Ascending aorta (tissue), 2 donors: ENCODE measurements at regions of chr20 and their contacts with region 1.

Region 1: DNA sequence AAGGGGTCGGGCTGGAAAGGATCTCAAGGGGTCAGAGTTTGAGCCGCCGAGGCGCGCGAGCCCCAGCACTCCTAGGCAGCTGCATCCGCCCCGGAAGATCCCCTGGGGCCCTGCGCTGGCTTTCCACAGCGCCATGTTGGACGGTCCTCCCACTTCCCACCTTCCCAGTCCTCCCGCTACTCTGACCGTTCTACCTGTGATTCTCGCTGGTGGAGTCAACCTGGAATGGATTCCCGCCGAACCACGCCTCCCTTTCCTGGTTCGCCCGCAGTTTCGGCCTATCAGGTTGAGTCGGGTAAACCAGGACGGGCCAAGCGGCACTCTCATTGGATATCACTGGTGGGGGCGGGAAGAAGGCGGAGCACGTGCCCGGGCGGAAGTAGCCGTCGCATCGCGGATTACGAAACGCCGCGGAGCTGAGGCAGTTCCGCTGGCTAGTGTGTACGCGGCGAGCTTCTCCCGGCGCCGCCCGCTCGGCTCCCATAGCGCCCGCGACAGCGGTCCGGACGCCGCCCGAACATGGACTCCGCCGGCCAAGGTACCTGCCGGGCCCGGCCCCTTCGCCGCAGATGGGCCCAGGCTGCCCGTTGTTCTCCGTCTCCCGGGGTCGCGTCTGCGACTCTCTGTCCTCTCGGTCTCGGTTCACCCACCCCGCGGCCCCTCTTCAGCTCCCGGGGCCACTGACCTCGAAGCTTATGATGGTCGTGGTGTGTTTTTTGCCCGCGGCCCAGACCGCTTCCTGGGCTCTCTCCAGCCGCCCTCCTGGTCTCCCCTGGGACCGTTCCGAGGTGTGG is at the start of gene TPD52L2:
- DNase-seq: peak; percentile 95 to 99
- H3K4me3 ChIP-seq: peak within 1 kb of the TSS; percentile 77 to 92
- H3K27ac ChIP-seq: peak within 1 kb of the TSS; percentile 92 to 98
- H3K4me1 ChIP-seq: peaks cover 0 to 22% of the 10 kb centered on the region in 2 donors
- H3K27me3 ChIP-seq: no peaks in the 10 kb centered on the region
- CTCF ChIP-seq: peak in 1 of 3 experiments; percentile 5
- total RNA-seq, gene TPD52L2: 161 TPM

Region 2: GRCh38 chr20:63537525-63538203 is 327.4 kb before region 1 on chr20:
- intact Hi-C with region 1: loop called (anchors 2 kb)
- DNase-seq: peak; percentile 66 to 90
- H3K4me3 ChIP-seq: peak overlapping the region; percentile 5 to 32
- H3K27ac ChIP-seq: no peak overlapping the region
- H3K4me1 ChIP-seq: peaks cover 0 to 2% of the 10 kb centered on the region in 2 donors
- H3K27me3 ChIP-seq: peaks cover 8% of the 10 kb centered on the region
- CTCF ChIP-seq: peak; percentile 93 to 94 (median 94)

Region 3: DNA sequence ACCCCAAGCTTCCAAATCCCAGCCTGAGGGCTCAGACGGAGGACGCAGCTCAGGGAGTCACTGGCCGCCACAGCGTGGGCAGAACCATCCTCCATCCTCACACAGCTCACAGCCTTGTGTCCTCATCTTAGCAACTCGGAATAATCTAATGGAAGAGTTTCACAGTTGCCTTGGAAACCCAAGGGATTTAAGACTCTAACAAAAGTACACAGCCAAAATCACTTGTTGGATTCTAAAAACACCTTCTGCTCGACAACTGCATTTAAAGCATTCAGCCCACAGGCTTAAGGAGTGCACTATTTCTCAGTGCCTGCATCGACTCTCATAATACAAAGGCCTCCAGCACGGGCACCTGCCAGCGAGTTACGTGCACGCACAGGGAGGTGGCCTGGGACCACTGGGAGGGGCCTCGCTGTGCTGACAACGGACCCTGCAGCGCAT is 79.3 kb before region 1 on chr20:
- intact Hi-C with region 1: loop called (anchors 2 kb)
- DNase-seq: no peak
- H3K4me3 ChIP-seq: no peak overlapping the region
- H3K27ac ChIP-seq: no peak overlapping the region
- H3K4me1 ChIP-seq: no peaks in the 10 kb centered on the region
- H3K27me3 ChIP-seq: no peaks in the 10 kb centered on the region
- CTCF ChIP-seq: no peak

Region 4: GRCh38 chr20:63835021-63835858 is 29.8 kb before region 1 on chr20:
- intact Hi-C with region 1: loop called (anchors 1 kb)
- DNase-seq: peak; percentile 88 to 95
- H3K4me3 ChIP-seq: peak overlapping the region in 1 of 2 donors; percentile 16
- H3K27ac ChIP-seq: peak overlapping the region; percentile 60 to 73
- H3K4me1 ChIP-seq: peaks cover 14 to 20% of the 10 kb centered on the region in 2 donors
- H3K27me3 ChIP-seq: no peaks in the 10 kb centered on the region
- CTCF ChIP-seq: no peak

Region 5: DNA sequence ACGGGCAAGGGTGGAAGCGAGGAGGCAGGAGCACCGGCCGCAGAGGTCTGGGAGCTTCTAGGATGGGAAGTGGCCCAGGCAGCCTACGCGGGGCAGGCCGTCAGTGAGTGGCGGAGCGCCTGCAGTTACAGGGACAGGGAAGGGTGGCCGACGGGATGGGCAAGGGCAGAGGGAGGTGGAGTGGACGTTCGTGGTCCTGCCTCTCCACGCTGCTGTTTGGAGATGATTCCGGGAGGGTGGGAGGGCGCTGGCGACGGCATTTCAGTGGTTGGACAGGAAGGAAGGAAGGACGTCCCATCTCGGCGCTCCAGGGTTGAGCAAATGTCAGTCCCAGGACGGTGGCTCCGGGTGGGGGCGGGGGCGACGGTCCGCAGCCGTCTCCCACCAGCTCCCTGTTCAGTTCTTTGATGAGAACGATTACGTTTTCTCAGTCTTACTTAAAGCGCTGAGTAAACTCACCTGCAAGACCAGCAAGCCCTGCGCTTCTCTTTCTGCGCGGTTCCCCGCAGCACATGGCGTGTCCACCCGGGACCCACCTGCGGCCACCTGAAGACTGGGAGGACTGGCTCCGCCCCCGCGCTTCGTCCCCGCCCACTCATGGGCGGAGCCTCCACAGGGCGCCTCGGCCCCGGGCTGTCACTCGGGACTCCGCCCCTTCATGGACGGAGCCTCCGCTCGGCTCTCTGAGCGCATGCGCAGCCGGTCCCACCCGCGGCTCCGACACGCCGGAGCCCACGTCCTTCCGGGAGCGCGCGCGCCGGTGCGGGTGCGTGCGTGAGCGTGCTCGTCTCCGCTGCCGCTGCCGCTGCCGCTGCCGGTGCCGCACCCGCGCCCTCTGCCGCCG is 29.5 kb after region 1 on chr20 and contains the start of gene DNAJC5:
- intact Hi-C with region 1: loop called (anchors 1 kb)
- DNase-seq: peak; percentile 64 to 96
- H3K4me3 ChIP-seq: peak within 1 kb of the TSS; percentile 77 to 91
- H3K27ac ChIP-seq: peak within 1 kb of the TSS; percentile 62 to 63
- H3K4me1 ChIP-seq: peaks cover 11 to 12% of the 10 kb centered on the region in 2 donors
- H3K27me3 ChIP-seq: no peaks in the 10 kb centered on the region
- CTCF ChIP-seq: no peak
- total RNA-seq, gene DNAJC5: 42.9 TPM

Region 6: DNA sequence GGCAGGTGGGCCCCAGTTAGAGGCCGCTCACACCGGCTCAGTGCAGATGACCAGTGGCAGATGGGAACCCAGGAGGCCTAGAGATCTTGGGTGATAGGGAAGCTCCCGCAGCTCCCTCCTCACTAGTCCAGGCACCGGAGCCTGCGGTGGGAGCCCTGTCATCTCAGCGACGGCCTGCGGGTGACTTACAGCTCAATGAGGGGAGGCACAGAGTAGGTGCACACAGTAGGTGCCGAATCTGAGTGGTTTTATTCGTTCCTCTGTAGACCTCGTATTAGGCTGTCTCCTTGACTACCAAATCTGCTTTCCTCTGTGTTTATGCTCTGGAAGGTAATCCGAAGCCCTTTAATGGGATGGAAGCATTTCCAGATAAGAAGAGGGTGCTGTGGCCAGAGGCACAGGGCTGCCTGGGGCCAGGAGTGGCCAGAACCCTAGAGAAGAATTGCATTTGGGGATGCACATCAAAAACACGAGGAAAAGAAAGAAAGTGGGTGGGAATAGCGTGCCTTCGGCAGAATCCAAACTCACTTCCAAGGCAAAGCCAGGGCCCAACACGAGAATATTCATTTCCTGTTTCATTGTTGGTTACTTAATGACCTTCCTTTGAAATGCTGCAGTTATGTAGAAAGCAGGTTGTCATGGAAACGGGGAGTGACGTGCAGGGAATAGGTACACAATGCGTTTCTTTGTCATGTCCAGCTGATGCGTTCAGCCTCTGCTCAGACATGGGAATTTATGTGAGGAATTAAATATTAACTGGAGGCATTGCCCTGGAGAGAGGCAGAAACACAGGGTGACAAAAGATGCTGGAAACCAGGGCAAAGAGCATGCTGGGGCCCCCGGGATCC is 323.9 kb after region 1 on chr20:
- intact Hi-C with region 1: no loop called
- DNase-seq: no peak
- H3K4me3 ChIP-seq: no peak overlapping the region
- H3K27ac ChIP-seq: no peak overlapping the region
- H3K4me1 ChIP-seq: no peaks in the 10 kb centered on the region
- H3K27me3 ChIP-seq: no peaks in the 10 kb centered on the region
- CTCF ChIP-seq: no peak